CD14-positive monocyte (primary cell): ENCODE measurements at regions of chr10 and their contacts with region 1.

Region 1: GRCh38 chr10:106705681-106706100 is 458.8 kb downstream of the SORCS1 start:
- DNase-seq: peak; percentile 11 to 39 (median 32)
- H3K4me3 ChIP-seq: no peak overlapping the region
- H3K4me3 Mint-ChIP-seq: no peak overlapping the region
- H3K27ac ChIP-seq: no peak overlapping the region
- H3K27ac Mint-ChIP-seq: no peak overlapping the region
- H3K4me1 ChIP-seq: no peaks in the 10 kb centered on the region
- H3K4me1 Mint-ChIP-seq: no peaks in the 10 kb centered on the region
- H3K27me3 ChIP-seq: peaks cover 0 to 3% of the 10 kb centered on the region in 2 donors
- H3K27me3 Mint-ChIP-seq: peaks cover 1 to 2% (median 1%) of the 10 kb centered on the region in 3 donors
- CTCF ChIP-seq: peak; percentile 87

Region 2: GRCh38 chr10:106011250-106011649 is 694.4 kb before region 1 on chr10:
- intact Hi-C with region 1: no loop called
- DNase-seq: no peak
- H3K4me3 ChIP-seq: no peak overlapping the region
- H3K4me3 Mint-ChIP-seq: no peak overlapping the region
- H3K27ac ChIP-seq: no peak overlapping the region
- H3K27ac Mint-ChIP-seq: no peak overlapping the region
- H3K4me1 ChIP-seq: no peaks in the 10 kb centered on the region
- H3K4me1 Mint-ChIP-seq: no peaks in the 10 kb centered on the region
- H3K27me3 ChIP-seq: no peaks in the 10 kb centered on the region
- H3K27me3 Mint-ChIP-seq: no peaks in the 10 kb centered on the region
- CTCF ChIP-seq: no peak

Region 3: DNA sequence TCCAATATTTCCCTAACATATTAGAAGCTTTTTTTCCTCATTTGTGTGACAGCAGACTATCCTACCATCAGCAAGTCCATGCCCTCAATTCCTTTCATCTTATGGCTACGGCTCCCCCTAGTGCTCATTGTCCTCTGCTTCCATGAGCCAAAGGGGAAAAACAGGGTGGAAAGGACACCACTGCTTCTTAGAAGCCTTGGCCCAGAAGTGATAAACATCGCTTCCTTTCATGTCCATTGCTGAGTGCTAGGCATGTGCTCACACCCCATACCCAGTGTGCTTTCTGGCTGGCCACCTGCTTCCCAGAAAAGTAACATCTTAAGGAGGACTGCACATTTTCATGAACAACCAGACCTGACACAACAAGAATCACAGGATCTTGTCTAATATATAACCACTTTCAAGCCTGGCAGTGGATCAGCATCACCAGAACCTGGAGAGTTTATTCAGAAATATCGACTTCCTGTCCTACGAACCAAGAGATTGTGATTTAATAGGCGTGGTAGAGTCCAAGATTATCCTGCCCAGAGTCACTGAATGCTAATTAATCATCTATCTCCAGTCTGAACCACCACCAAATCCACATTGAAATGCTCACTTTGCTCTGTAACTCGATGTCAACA is 1109.3 kb after region 1 on chr10:
- intact Hi-C with region 1: loop called (anchors 10 kb)
- DNase-seq: peak; percentile 3 to 40 (median 24)
- H3K4me3 ChIP-seq: no peak overlapping the region
- H3K4me3 Mint-ChIP-seq: no peak overlapping the region
- H3K27ac ChIP-seq: no peak overlapping the region
- H3K27ac Mint-ChIP-seq: no peak overlapping the region
- H3K4me1 ChIP-seq: no peaks in the 10 kb centered on the region
- H3K4me1 Mint-ChIP-seq: no peaks in the 10 kb centered on the region
- H3K27me3 ChIP-seq: no peaks in the 10 kb centered on the region
- H3K27me3 Mint-ChIP-seq: peaks cover 0 to 1% (median 0%) of the 10 kb centered on the region in 3 donors
- CTCF ChIP-seq: peak; percentile 69

Region 4: DNA sequence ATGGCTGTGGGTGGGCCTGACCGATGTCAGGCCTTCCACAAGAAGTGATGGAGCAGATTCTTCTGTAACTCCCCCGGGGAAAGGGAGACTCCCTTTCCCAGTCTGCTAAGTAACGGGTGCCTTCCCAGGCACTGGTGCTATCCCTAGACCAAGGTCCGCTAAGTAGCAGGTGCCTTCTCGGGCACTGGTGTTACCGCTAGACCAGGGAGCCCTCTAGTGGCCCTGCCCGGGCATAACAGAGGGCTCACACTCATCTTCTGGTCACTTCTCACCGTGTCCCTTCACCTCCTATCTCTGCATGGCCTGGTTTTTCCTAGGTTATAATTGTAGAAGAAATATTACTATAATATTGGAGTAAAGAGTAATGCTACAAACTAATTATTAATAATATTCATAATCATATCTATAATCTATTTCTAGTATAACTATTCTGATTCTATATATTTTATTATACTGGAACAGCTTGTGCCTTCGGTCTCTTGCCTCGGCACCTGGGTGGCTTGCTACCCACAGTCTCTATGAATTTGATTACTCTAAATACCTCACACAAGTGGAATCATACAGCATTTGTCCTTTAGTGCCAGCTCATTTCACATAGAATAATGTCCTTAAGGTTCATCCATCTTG is 1838.9 kb after region 1 on chr10:
- intact Hi-C with region 1: loop called (anchors 5 to 10 kb)
- DNase-seq: peak; percentile 2 to 21 (median 7)
- H3K4me3 ChIP-seq: no peak overlapping the region
- H3K4me3 Mint-ChIP-seq: no peak overlapping the region
- H3K27ac ChIP-seq: no peak overlapping the region
- H3K27ac Mint-ChIP-seq: no peak overlapping the region
- H3K4me1 ChIP-seq: no peaks in the 10 kb centered on the region
- H3K4me1 Mint-ChIP-seq: peaks cover 4% of the 10 kb centered on the region
- H3K27me3 ChIP-seq: no peaks in the 10 kb centered on the region
- H3K27me3 Mint-ChIP-seq: no peaks in the 10 kb centered on the region
- CTCF ChIP-seq: peak; percentile 96